ENCODE measurements at regions of chr22 and their contacts with region 1.

Region 1: GRCh38 chr22:50576070-50576469 is 2.2 kb downstream of the CPT1B start:
- DNase-seq: no peak
- ATAC-seq: no peak

Region 2: GRCh38 chr22:50271519-50271970 is 304.5 kb before region 1 on chr22:
- intact Hi-C with region 1: no loop called
- DNase-seq: peak; percentile 82
- ATAC-seq: peak; percentile 23

Region 3: DNA sequence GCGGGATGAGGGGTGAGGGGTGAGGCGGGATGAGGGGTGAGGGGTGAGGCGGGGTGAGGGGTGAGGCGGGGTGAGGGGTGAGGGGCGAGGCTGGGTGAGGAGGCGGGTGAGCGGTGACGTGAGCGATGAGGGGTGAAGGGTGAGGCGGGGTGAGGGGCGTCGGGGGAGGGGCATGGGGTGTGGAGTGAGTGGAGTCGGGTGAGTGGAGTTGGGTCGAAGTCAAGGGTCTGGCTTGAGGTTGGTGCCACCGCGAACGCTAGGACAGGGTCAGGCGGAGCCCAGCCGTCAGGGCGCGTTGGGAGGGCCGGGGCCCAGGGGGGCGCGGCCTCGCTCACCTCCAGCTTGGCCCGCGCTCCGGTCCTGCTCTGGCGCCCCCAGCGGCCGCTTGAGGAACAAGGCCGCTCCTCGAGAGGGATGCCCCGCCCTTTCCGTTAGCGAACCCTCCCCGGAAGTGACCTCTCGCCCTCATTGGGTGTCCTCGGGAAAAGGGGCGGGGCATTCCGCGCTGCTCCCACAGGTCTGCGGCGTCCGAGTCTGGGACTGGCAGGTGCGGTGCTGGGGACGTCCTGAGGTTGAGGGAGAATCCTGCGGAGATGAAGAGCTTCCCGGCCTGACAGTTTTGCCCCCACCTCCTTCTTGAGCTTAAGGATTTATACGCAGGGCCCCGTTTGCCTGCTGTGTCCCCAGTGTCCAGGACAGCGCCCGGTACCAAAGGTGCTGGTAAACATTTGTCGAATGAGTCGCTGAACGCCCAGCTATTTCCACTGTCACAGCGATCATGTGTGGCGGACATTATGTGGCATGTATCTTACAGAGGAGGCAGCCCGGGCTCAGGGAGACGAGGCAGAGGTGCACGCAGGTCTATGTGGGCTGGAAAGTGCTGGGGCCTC is 13.3 kb before region 1 on chr22 and contains the start of gene SYCE3:
- intact Hi-C with region 1: loop called (anchors 1 kb)
- DNase-seq: peak; percentile 99
- ATAC-seq: peak; percentile 97
- total RNA-seq, gene SYCE3: not detected